Gastrocnemius medialis (tissue), 4 donors: ENCODE measurements at regions of chr6 and their contacts with region 1.

Region 1: GRCh38 chr6:99467509-99468106 is 42.5 kb upstream of the PNISR start:
- DNase-seq: no peak
- ATAC-seq: peak in 1 of 2 donors; percentile 44
- H3K4me3 ChIP-seq: no peak overlapping the region
- H3K27ac ChIP-seq: no peak overlapping the region
- H3K4me1 ChIP-seq: no peaks in the 10 kb centered on the region
- H3K27me3 ChIP-seq: no peaks in the 10 kb centered on the region
- CTCF ChIP-seq: peak in 4 of 5 experiments; percentile 33 to 63 (median 54)
- POLR2A ChIP-seq: no peak

Region 2: GRCh38 chr6:99318542-99318941 is 149.1 kb before region 1 on chr6:
- in situ Hi-C with region 1: no loop called
- intact Hi-C with region 1: no loop called
- DNase-seq: no peak
- ATAC-seq: no peak
- H3K4me3 ChIP-seq: no peak overlapping the region
- H3K27ac ChIP-seq: no peak overlapping the region
- H3K4me1 ChIP-seq: no peaks in the 10 kb centered on the region
- H3K27me3 ChIP-seq: no peaks in the 10 kb centered on the region
- CTCF ChIP-seq: no peak
- POLR2A ChIP-seq: no peak

Region 3: DNA sequence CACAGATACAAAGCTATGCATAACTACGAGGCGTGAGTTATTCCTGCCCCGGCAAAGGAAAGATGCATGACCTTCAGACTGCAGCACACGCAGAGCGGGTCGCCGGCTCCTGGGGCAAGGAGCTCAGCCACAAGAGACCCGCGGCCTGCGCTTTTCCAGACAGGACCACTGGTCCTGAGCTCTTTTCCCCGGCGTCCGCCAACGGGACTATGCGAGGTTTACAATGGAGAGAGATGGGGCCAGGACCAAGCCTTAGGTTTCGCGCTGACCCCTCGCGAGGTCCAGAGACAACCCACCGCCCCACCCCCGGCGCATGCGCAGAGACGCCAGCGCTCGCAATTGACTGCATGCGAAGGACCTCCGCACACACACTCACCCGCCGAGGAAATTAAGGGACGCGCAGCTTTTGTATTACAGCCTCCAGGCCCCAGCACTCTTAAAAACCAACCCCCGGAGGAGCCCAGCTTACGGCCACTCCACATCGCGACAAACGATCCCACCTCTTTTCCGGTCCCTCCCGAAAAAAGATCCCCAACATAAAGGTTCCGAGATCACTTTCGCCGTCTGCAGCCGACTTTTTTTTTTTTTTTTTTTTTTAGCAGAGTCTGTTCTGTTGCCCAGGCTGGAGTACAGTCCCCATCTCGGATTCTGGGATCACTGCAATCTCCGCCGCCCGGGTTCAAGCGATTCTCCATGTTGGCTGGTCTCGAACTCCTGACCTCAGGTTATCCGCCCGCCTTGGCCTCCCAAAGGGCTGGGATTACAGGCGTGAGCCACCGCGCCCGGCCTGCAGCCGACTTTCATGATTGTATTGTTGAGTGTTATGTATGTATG is 73.7 kb before region 1 on chr6 and contains the start of gene COQ3:
- in situ Hi-C with region 1: no loop called
- intact Hi-C with region 1: no loop called
- DNase-seq: peak; percentile 30 to 53
- ATAC-seq: peak; percentile 73 to 86
- H3K4me3 ChIP-seq: peak within 1 kb of the TSS; percentile 71 to 92 (median 81)
- H3K27ac ChIP-seq: peak within 1 kb of the TSS; percentile 75 to 88 (median 81)
- H3K4me1 ChIP-seq: peaks cover 5% of the 10 kb centered on the region in 2 donors
- H3K27me3 ChIP-seq: no peaks in the 10 kb centered on the region
- CTCF ChIP-seq: no peak
- POLR2A ChIP-seq: no peak
- total RNA-seq, gene COQ3: 4.2 to 11.4 (median 7.3) TPM

Region 4: GRCh38 chr6:99514089-99514488 is 46.5 kb after region 1 on chr6:
- in situ Hi-C with region 1: no loop called
- intact Hi-C with region 1: no loop called
- DNase-seq: no peak
- ATAC-seq: no peak
- H3K4me3 ChIP-seq: peak overlapping the region; percentile 61 to 87 (median 74)
- H3K27ac ChIP-seq: peak overlapping the region in 3 of 4 donors; percentile 86 to 95 (median 92)
- H3K4me1 ChIP-seq: peaks cover 15 to 27% of the 10 kb centered on the region in 2 donors
- H3K27me3 ChIP-seq: no peaks in the 10 kb centered on the region
- CTCF ChIP-seq: no peak
- POLR2A ChIP-seq: no peak

Region 5: DNA sequence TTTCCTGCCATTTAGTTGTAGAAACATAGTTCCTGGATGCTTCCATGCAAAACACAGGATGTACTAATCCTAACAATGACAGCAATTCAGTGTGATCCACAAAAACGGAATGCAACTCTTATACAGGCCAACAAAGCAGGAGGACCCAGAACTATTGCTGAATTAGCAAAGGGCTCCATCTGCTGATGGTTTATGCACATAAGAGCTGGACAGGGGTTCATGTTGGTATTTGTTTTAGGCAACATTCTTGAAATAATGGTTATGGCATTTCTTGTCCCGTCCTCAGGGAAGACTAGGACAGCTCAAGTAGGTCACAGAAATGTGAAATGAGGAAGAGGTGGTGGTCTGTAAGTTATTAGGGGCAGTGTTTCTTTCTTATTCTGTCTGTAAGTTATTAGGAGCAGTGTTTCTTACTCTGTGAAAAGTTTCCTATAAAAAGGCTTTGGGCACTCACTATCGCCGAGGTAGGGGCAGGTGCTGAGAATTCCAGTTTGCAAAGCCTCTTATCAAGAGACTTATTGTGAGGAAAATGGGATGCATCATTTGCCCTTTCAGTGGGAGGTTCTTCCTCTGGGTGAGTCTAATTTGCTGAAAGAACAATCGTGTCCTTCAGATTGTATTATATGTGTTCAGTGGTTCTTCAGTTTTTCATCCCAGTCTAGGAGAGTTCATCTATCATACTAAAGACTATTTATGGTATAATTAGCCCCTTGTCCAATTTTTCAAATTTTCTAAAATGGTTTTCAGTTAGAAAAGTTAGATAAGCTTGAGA is 355.3 kb after region 1 on chr6:
- in situ Hi-C with region 1: no loop called
- intact Hi-C with region 1: loop called (anchors 5 kb)
- DNase-seq: no peak
- ATAC-seq: peak in 1 of 2 donors; percentile 58
- H3K4me3 ChIP-seq: no peak overlapping the region
- H3K27ac ChIP-seq: no peak overlapping the region
- H3K4me1 ChIP-seq: no peaks in the 10 kb centered on the region
- H3K27me3 ChIP-seq: peaks cover 0 to 7% (median 5%) of the 10 kb centered on the region in 3 donors
- CTCF ChIP-seq: peak in 1 of 5 experiments; percentile 45
- POLR2A ChIP-seq: no peak